ENCODE measurements at regions of chr7 and their contacts with region 1.

Region 1: GRCh38 chr7:29105752-29106668 is 40.3 kb downstream of the CPVL start:
- DNase-seq: peak in 3 of 14 experiments; percentile 31 to 54 (median 37)
- ATAC-seq: peak; percentile 61
- H3K4me3 ChIP-seq: no peak overlapping the region
- H3K4me3 Mint-ChIP-seq: no peak overlapping the region
- H3K27ac ChIP-seq: no peak overlapping the region
- H3K27ac Mint-ChIP-seq: no peak overlapping the region
- H3K4me1 ChIP-seq: no peaks in the 10 kb centered on the region
- H3K4me1 Mint-ChIP-seq: peaks cover 6% of the 10 kb centered on the region
- H3K27me3 ChIP-seq: no peaks in the 10 kb centered on the region
- H3K27me3 Mint-ChIP-seq: no peaks in the 10 kb centered on the region
- CTCF ChIP-seq: peak; percentile 53

Region 2: GRCh38 chr7:28921822-28922221 is 184.2 kb before region 1 on chr7:
- CTCF ChIA-PET with region 1: interaction called, 4 read pairs
- POLR2A ChIA-PET with region 1: interaction called, 3 read pairs
- intact Hi-C with region 1: loop called (anchors 1 to 2 kb)
- DNase-seq: peak in 7 of 14 experiments; percentile 4 to 68 (median 39)
- ATAC-seq: peak; percentile 89
- H3K4me3 ChIP-seq: no peak overlapping the region
- H3K4me3 Mint-ChIP-seq: no peak overlapping the region
- H3K27ac ChIP-seq: no peak overlapping the region
- H3K27ac Mint-ChIP-seq: no peak overlapping the region
- H3K4me1 ChIP-seq: no peaks in the 10 kb centered on the region
- H3K4me1 Mint-ChIP-seq: peaks cover 14% of the 10 kb centered on the region
- H3K27me3 ChIP-seq: no peaks in the 10 kb centered on the region
- H3K27me3 Mint-ChIP-seq: no peaks in the 10 kb centered on the region
- CTCF ChIP-seq: peak; percentile 79

Region 3: DNA sequence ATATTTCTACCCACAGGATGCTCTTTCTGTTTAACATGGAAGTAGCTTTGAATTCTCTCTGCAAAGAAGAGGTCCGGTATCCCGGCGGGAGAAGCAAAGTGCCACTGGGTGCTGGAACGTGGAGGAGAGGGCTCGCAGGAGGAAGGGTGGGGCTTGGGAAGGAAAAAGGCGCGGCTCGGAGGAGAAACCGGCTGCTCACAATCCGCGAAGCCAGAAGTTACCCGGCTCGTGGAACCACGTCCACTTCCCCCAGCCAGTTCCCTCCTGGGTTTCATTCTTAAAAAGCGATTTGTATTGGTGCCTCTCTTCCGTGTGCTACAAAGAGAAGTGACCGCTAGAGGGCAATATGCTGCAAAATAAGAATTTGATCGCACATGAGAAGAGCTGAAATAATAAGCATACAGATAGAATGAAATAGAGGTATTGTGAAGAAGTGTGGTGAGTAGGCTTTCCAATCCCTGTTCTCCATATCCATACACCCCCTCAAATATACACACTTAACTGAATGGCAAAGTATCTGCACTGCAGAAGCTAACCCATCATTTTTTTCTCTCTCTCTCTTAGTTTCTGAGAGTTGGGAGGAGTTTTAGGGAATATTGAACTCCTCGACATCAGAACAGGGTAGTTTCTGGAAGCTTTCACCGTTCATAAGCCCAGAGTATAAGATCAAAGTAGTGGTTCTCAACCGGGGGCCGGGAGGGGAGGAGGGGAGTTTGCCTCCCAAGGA is 179.0 kb before region 1 on chr7:
- CTCF ChIA-PET with region 1: interaction called, 4 read pairs
- POLR2A ChIA-PET with region 1: interaction called, 3 read pairs
- intact Hi-C with region 1: loop called (anchors 1 to 2 kb)
- DNase-seq: peak; percentile 3 to 79 (median 26)
- ATAC-seq: peak; percentile 91
- H3K4me3 ChIP-seq: peak overlapping the region; percentile 58
- H3K4me3 Mint-ChIP-seq: peak overlapping the region; percentile 91
- H3K27ac ChIP-seq: no peak overlapping the region
- H3K27ac Mint-ChIP-seq: no peak overlapping the region
- H3K4me1 ChIP-seq: peaks cover 7% of the 10 kb centered on the region
- H3K4me1 Mint-ChIP-seq: peaks cover 20% of the 10 kb centered on the region
- H3K27me3 ChIP-seq: no peaks in the 10 kb centered on the region
- H3K27me3 Mint-ChIP-seq: peaks cover 16% of the 10 kb centered on the region
- CTCF ChIP-seq: peak; percentile 78

Region 4: DNA sequence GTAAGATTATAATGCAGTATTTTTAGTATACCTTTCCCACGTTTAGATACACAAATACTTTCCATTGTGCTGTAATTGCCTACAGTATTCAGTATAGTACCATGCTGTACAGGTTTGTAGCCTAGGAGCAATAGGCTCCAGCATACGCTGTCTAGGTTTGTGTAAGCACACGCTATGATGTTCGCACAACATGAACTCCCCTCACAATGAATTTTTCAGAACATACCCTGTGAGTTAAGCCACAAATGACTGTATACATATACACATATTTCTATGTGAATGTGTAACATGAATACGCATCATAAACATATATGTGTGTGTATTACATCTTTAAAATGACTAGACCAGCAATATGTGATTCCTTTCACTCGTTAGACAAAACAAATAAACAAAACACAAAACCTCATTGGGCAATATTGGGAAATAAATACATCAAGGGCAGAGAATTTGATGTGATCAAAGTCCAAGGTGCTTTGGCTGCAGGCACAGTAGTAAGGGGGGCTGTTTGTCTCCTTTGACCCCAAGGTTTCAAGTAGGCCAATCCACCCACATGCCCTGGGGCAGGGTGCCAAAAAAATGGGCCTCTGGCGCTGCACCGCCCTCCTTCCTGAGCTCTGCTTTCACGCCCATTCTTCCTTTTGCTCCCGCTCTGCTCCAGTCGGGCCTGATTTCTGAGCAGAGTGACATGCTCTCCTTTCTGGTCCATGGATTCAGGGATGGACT is 122.4 kb after region 1 on chr7:
- CTCF ChIA-PET with region 1: no interaction called
- POLR2A ChIA-PET with region 1: no interaction called
- intact Hi-C with region 1: no loop called
- DNase-seq: no peak
- ATAC-seq: no peak
- H3K4me3 ChIP-seq: no peak overlapping the region
- H3K4me3 Mint-ChIP-seq: no peak overlapping the region
- H3K27ac ChIP-seq: no peak overlapping the region
- H3K27ac Mint-ChIP-seq: no peak overlapping the region
- H3K4me1 ChIP-seq: no peaks in the 10 kb centered on the region
- H3K4me1 Mint-ChIP-seq: no peaks in the 10 kb centered on the region
- H3K27me3 ChIP-seq: no peaks in the 10 kb centered on the region
- H3K27me3 Mint-ChIP-seq: no peaks in the 10 kb centered on the region
- CTCF ChIP-seq: no peak

Region 5: GRCh38 chr7:29408841-29409243 is 302.8 kb after region 1 on chr7:
- CTCF ChIA-PET with region 1: no interaction called
- POLR2A ChIA-PET with region 1: no interaction called
- intact Hi-C with region 1: loop called (anchors 5 kb)
- DNase-seq: peak in 12 of 14 experiments; percentile 3 to 76 (median 31)
- ATAC-seq: no peak
- H3K4me3 ChIP-seq: no peak overlapping the region
- H3K4me3 Mint-ChIP-seq: no peak overlapping the region
- H3K27ac ChIP-seq: no peak overlapping the region
- H3K27ac Mint-ChIP-seq: no peak overlapping the region
- H3K4me1 ChIP-seq: no peaks in the 10 kb centered on the region
- H3K4me1 Mint-ChIP-seq: no peaks in the 10 kb centered on the region
- H3K27me3 ChIP-seq: no peaks in the 10 kb centered on the region
- H3K27me3 Mint-ChIP-seq: peaks cover 4% of the 10 kb centered on the region
- CTCF ChIP-seq: peak; percentile 89

Measured in CD4-positive, alpha-beta T cell (primary cell).